Dendritic cell treated with granulocyte-macrophage colony-stimulating factor and Interleukin-4, amounts not matched to agents 40 ng/mL and 50 ng/mL, for 4 days (primary cell): ENCODE measurements at regions of chr6 and their contacts with region 1.

Region 1: DNA sequence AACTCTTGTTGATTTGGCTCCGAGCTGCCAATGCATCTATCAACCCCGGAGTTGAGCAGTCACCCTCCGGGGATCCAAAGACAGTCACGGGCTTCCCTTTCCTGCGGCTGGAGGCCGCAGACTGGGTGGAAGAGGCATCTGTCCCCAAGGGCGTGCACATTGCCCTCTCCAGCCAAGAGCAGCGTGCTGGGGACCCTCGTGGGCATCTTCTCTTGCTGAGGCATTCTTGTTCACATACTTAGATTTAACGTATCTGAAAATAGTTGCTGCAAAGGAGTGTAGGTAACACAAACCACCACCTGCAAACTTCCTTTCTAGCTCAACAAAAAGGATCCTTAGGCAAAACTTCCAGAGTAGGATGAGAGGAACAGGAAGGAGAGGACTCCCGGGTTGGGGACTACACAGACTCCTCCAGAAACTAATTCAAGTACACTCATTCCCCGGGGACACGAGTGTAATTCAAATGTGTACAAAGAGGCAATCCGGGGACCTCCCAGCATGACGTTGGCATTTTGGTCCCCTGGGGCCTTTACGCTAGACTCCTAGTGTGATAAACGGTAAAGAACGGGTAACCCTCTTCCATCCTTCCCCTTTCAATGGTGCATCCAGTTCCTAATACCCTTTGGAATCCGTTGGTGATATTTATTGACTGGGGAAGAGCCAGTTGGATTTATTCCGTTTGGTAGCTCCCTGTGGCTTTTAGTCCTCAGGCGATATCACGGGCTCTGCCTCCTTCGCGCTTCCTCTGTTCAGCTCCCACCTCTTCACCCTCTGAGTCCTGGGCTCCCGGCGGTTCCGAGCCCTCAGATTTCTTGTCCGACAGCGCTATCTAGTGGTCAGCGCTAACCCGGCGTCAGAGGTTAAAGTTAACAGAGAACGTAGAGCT is 2.7 kb upstream of the COL12A1 start:
- H3K4me3 Mint-ChIP-seq: peak overlapping the region; percentile 62
- H3K27ac Mint-ChIP-seq: no peak overlapping the region
- H3K4me1 Mint-ChIP-seq: peaks cover 49% of the 10 kb centered on the region
- H3K27me3 Mint-ChIP-seq: peaks cover 70% of the 10 kb centered on the region

Region 2: GRCh38 chr6:73675466-73676098 is 1533.0 kb before region 1 on chr6:
- intact Hi-C with region 1: loop called (anchors 10 kb)
- H3K4me3 Mint-ChIP-seq: no peak overlapping the region
- H3K27ac Mint-ChIP-seq: no peak overlapping the region
- H3K4me1 Mint-ChIP-seq: peaks cover 8% of the 10 kb centered on the region
- H3K27me3 Mint-ChIP-seq: no peaks in the 10 kb centered on the region

Region 3: GRCh38 chr6:73739096-73739495 is 1469.4 kb before region 1 on chr6:
- intact Hi-C with region 1: loop called (anchors 2 kb)
- H3K4me3 Mint-ChIP-seq: no peak overlapping the region
- H3K27ac Mint-ChIP-seq: no peak overlapping the region
- H3K4me1 Mint-ChIP-seq: peaks cover 5% of the 10 kb centered on the region
- H3K27me3 Mint-ChIP-seq: no peaks in the 10 kb centered on the region

Region 4: GRCh38 chr6:73854998-73855718 is 1353.4 kb before region 1 on chr6:
- intact Hi-C with region 1: loop called (anchors 2 kb)
- H3K4me3 Mint-ChIP-seq: no peak overlapping the region
- H3K27ac Mint-ChIP-seq: no peak overlapping the region
- H3K4me1 Mint-ChIP-seq: no peaks in the 10 kb centered on the region
- H3K27me3 Mint-ChIP-seq: no peaks in the 10 kb centered on the region

Region 5: DNA sequence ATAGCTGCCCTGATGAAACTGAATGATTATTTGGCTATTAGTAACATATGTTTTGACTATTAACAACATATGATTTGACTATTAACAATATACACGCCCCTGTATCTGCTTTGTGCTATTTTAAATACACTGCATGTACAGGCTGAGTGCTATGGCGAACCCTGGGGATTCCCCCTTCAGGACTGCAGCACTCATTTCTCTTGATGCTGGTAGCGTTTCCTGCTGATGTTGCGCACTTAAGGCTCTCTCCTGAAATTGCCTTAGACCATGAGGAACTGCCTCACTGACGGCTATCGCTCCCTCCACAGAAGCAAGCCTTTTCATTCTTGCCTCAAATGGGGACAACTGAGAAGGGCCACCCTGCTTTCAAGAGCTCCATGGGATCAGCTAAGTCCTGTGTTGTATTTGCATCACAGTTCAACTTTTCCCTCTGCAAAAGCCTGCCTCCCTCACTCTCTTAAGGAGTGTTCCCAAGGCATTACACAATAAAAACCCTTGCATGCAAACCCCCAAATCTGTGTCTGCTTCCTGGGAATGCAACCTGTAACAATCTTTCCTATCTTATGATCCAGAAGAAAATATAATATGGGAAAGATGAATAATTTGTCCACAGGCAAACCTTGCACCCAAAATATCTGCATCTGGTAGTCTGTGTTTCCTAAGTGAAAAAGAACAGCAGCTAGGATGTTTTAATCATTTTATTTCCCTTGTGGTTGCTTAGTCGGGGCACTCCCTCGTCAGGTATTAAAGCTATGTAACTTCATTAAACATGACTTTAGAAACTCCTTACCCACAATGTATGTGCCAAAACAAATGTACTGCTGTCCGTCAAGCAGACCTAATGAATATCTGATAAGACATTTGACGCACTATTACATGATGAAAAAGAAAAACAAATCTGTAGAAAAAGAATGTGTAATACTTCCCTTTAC is 459.1 kb before region 1 on chr6:
- intact Hi-C with region 1: no loop called
- H3K4me3 Mint-ChIP-seq: no peak overlapping the region
- H3K27ac Mint-ChIP-seq: no peak overlapping the region
- H3K4me1 Mint-ChIP-seq: no peaks in the 10 kb centered on the region
- H3K27me3 Mint-ChIP-seq: no peaks in the 10 kb centered on the region

Region 6: DNA sequence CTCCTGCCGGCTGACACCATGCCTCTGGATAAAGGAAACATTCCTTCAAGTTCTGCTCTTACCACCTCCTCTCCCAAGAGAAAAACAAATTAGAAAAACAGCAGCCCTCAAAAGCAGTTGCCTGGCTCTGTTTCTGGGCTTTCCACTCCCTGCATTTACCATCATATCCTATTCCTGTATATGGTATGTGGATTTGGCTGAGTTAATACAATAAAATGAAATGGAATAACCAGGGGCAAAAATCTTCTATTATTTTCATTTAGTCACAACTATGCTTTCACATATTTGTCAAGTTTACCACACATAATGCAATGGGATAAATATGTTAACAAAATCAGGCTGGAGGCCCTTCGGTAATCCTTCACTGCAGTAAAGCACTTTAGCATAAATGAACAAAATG is 37.0 kb before region 1 on chr6:
- intact Hi-C with region 1: no loop called
- H3K4me3 Mint-ChIP-seq: no peak overlapping the region
- H3K27ac Mint-ChIP-seq: no peak overlapping the region
- H3K4me1 Mint-ChIP-seq: no peaks in the 10 kb centered on the region
- H3K27me3 Mint-ChIP-seq: peaks cover 3% of the 10 kb centered on the region

Region 7: GRCh38 chr6:75257343-75258087 is 49.0 kb after region 1 on chr6:
- intact Hi-C with region 1: no loop called
- H3K4me3 Mint-ChIP-seq: no peak overlapping the region
- H3K27ac Mint-ChIP-seq: no peak overlapping the region
- H3K4me1 Mint-ChIP-seq: no peaks in the 10 kb centered on the region
- H3K27me3 Mint-ChIP-seq: no peaks in the 10 kb centered on the region

Region 8: GRCh38 chr6:75449716-75450115 is 241.2 kb after region 1 on chr6:
- intact Hi-C with region 1: no loop called
- H3K4me3 Mint-ChIP-seq: no peak overlapping the region
- H3K27ac Mint-ChIP-seq: no peak overlapping the region
- H3K4me1 Mint-ChIP-seq: no peaks in the 10 kb centered on the region
- H3K27me3 Mint-ChIP-seq: no peaks in the 10 kb centered on the region